Activated naive CD4-positive, alpha-beta T cell treated with anti-CD3 and anti-CD28 coated beads for 36 hours (primary cell): ENCODE measurements at regions of chr15 and their contacts with region 1.

Region 1: DNA sequence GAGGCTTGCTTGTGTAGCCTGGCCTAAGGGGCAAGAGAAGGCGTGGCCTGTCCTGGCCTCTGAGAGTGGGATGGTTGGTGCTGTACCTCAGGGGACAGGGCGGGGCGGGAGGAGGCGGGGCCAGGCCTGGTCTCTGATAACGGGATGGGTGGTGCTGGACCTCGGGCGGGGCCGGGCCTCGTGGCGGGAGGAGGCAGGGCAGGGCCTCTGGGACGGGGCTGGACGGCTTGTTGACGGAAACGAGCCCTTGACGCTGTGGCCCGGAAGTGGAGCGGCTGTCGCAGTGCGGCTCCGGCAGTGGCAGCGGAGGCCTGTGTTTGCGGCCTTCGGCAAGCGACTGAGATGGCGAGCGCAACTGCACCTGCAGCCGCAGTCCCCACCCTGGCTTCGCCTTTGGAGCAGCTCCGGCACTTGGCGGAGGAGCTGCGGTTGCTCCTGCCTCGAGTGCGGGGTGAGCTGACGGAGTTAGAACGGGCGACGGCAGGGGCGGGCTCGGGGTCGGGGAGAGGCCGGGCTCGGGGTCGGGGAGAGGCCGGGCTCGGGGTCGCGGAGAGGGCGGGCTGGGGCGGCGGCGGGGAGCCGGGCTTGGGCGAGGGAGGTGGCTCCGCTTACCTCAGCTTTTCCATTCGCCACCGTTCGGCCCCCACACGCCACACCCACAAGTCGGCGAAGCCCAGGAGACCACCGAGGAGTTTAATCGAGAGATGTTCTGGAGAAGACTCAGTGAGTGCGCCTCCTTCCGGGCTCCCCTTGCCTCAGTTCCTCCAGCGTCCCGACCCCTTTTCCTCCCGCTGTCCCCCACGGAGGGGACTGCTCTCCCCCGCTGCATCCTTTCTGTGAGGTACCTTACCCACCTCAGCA is at the start of gene CCNDBP1:
- DNase-seq: peak; percentile 94
- H3K4me3 Mint-ChIP-seq: peak within 1 kb of the TSS; percentile 93
- H3K27ac Mint-ChIP-seq: peak within 1 kb of the TSS; percentile 91
- H3K4me1 Mint-ChIP-seq: peaks cover 15% of the 10 kb centered on the region
- H3K27me3 Mint-ChIP-seq: no peaks in the 10 kb centered on the region
- total RNA-seq, gene CCNDBP1: 54.6 to 62.1 TPM

Region 2: GRCh38 chr15:43121863-43122262 is 63.5 kb before region 1 on chr15:
- CTCF ChIA-PET with region 1: no interaction called
- intact Hi-C with region 1: loop called (anchors 5 kb)
- DNase-seq: no peak
- H3K4me3 Mint-ChIP-seq: peak overlapping the region; percentile 80
- H3K27ac Mint-ChIP-seq: no peak overlapping the region
- H3K4me1 Mint-ChIP-seq: peaks cover 12% of the 10 kb centered on the region
- H3K27me3 Mint-ChIP-seq: peaks cover 5% of the 10 kb centered on the region

Region 3: GRCh38 chr15:43204016-43204901 is 18.9 kb after region 1 on chr15:
- CTCF ChIA-PET with region 1: interaction called, 7 read pairs
- intact Hi-C with region 1: loop called (anchors 1 kb)
- DNase-seq: peak; percentile 75
- H3K4me3 Mint-ChIP-seq: no peak overlapping the region
- H3K27ac Mint-ChIP-seq: no peak overlapping the region
- H3K4me1 Mint-ChIP-seq: peaks cover 5% of the 10 kb centered on the region
- H3K27me3 Mint-ChIP-seq: peaks cover 5% of the 10 kb centered on the region

Region 4: DNA sequence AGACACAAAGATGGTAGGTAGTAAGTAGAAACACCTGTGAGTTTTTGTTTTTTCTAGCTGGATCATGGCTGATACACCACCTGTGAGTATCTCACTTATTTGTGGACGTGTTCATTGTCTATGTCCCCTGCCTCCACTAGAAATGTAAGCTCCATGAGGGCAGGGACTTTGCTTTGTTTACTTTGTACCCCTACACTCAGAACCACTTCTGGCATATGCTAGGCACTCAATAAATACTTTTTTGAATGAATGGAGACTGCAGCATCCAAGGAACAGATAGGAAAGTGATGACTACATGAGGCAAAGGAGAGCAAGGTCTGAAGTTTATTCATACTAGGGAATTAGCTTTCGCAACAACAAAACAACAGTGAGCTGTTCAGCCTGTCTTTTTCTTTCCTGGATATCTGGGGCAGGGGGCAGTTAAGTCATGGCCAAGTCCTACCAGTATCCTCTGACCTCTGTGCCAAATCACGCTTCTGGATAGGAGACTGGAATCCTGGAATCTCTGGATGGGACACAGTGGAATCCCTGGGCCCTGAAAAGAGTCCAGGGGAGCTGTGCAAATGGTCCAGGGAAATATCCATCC is 47.0 kb after region 1 on chr15:
- CTCF ChIA-PET with region 1: no interaction called
- intact Hi-C with region 1: no loop called
- DNase-seq: no peak
- H3K4me3 Mint-ChIP-seq: no peak overlapping the region
- H3K27ac Mint-ChIP-seq: no peak overlapping the region
- H3K4me1 Mint-ChIP-seq: no peaks in the 10 kb centered on the region
- H3K27me3 Mint-ChIP-seq: peaks cover 4% of the 10 kb centered on the region

Region 5: GRCh38 chr15:43329960-43330779 is 144.8 kb after region 1 on chr15 and contains the start of gene LCMT2:
- CTCF ChIA-PET with region 1: no interaction called
- intact Hi-C with region 1: loop called (anchors 1 kb)
- DNase-seq: peak; percentile 93
- H3K4me3 Mint-ChIP-seq: peak within 1 kb of the TSS; percentile 95
- H3K27ac Mint-ChIP-seq: peak within 1 kb of the TSS; percentile 97
- H3K4me1 Mint-ChIP-seq: peaks cover 28% of the 10 kb centered on the region
- H3K27me3 Mint-ChIP-seq: no peaks in the 10 kb centered on the region
- total RNA-seq, gene LCMT2: 4.2 to 4.3 TPM

Region 6: DNA sequence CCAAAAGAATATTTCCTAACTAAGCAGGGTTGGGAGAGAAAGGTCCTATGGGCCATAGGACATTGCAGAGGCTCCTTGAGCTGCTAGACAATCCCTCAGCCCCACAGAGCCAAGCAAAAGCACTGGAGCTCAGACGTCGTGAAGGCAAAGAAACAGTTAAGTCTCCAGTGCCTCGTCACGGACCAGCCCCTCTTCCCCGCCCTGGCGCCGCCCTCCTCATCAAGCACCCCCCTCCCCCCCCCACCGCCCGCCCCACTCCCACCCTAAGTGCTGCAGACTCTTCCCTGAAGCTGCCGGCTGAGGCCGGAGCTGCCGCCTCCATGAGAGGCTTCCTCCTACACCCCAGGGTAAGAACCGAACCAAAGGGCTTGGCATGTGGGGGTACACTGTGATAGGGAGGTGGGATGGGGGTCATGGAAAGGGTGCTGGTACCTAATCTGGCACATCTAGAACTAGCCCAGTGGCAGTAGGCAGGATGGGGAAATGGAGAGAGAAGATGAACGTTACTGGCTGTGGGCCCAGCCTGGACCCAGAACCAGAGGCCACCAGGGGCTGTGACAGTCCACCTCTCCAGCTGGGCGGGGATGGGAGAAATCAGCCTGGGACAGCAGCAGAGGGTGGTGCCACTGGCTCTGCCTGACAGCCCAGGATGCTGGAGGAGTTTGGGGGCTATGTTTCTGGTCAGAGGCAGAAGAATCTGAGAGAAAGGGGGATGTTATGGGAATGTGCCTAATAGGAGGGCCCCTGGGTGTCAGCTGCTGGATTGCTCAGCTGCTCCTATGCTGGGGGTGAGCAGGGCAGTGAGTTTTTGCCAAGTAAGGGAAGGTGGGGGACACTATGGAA is 332.2 kb after region 1 on chr15 and contains the start of gene MAP1A:
- CTCF ChIA-PET with region 1: no interaction called
- intact Hi-C with region 1: no loop called
- DNase-seq: no peak
- H3K4me3 Mint-ChIP-seq: peak within 1 kb of the TSS; percentile 66
- H3K27ac Mint-ChIP-seq: no peak within 1 kb of the TSS
- H3K4me1 Mint-ChIP-seq: peaks cover 20% of the 10 kb centered on the region
- H3K27me3 Mint-ChIP-seq: peaks cover 28% of the 10 kb centered on the region
- total RNA-seq, gene MAP1A: 1.2 to 1.4 TPM